Caco-2 (cell line): ENCODE measurements at regions of chr5 and their contacts with region 1.

Region 1: DNA sequence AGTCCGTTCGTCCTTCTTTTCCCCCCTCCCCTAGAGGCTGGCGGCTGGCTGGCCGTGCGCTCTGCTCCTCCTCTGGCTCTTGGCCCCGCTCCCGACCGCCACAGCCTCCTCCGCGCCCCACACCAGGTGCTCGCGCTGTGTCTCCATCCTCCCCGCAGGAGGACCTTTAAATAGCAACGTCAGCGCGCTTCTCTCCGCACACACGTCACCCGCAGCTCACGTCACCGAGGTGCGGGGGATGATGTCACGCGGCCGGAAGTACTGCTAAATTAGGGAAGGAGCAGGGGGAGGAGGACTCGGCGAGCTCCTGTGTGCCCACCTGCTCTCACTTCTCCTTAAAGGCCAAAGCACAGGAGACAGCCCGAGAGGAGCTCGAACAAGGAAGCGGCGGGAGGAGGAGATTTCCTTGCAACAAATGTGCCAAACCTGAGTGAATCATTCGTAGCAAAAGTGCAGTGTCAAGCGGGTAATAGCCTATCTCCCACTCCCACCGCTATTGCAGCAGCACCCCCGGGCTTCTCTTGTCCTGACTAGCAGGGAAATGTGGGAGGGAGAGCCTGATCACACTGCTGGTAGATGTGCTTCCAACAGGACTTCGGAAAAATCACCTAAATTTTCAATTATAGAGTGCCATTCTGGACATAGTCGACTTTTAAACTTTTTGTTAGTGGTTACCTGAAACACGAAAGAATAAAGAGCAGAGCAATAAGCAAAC is 614 bp upstream of the HOMER1 start:
- DNase-seq: peak; percentile 93 to 96
- H3K4me3 ChIP-seq: peak overlapping the region; percentile 93
- H3K4me3 Mint-ChIP-seq: peak overlapping the region; percentile 85
- H3K27ac Mint-ChIP-seq: peak overlapping the region; percentile 91
- H3K4me1 ChIP-seq: peaks cover 18% of the 10 kb centered on the region; the same call in 1 of the 2 replicates
- H3K4me1 Mint-ChIP-seq: peaks cover 10% of the 10 kb centered on the region
- H3K27me3 ChIP-seq: no peaks in the 10 kb centered on the region
- H3K27me3 Mint-ChIP-seq: no peaks in the 10 kb centered on the region
- CTCF ChIP-seq: no peak

Region 2: DNA sequence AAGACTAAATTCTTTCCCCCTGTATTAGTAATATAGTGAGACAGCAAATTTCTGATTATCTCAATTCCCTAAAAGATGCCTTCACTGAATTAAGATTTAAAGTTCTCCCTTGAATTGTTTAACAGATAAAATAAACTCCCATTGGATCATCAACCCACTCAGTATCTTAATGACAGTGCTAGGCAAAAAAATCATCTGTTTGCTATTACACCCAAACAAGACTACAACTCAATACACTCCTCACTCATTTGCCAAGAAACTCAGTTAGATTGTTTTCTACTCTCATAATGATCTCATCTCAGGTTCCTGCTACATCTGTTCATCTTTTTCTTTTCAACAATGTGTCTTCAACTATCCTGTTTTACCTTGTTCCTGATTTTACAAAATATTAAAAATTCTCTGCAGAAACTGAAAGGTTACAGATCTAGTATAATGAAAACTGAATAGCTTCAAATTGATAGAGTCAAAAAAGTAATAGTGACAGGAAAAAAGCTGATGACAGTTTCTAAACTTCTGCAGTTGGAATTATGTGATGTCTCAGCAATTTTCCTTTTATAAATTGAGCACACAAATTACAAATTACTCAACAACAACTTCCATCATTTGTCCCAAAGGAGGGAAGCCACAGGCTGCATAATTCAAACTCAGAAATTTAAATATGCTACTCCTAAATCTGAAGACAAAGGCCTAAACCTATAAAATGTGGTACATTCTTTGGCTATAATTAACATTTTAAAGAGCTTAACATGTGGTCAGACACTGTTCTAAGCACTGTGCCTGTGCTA is 40.0 kb before region 1 on chr5:
- CTCF ChIA-PET with region 1: no interaction called
- POLR2A ChIA-PET with region 1: interaction called, 11 read pairs
- intact Hi-C with region 1: no loop called
- DNase-seq: no peak
- H3K4me3 ChIP-seq: no peak overlapping the region
- H3K4me3 Mint-ChIP-seq: no peak overlapping the region
- H3K27ac Mint-ChIP-seq: no peak overlapping the region
- H3K4me1 ChIP-seq: no peaks in the 10 kb centered on the region
- H3K4me1 Mint-ChIP-seq: peaks cover 6% of the 10 kb centered on the region
- H3K27me3 ChIP-seq: no peaks in the 10 kb centered on the region
- H3K27me3 Mint-ChIP-seq: no peaks in the 10 kb centered on the region
- CTCF ChIP-seq: no peak

Region 3: GRCh38 chr5:79612667-79613198 is 98.2 kb after region 1 on chr5:
- CTCF ChIA-PET with region 1: no interaction called
- POLR2A ChIA-PET with region 1: interaction called, 6 read pairs
- intact Hi-C with region 1: loop called (anchors 1 kb)
- DNase-seq: no peak
- H3K4me3 ChIP-seq: peak overlapping the region; percentile 88
- H3K4me3 Mint-ChIP-seq: peak overlapping the region; percentile 85
- H3K27ac Mint-ChIP-seq: peak overlapping the region; percentile 81
- H3K4me1 ChIP-seq: 0 out of 2 replicates have a peak, but pooled peaks cover 4% of the 10 kb centered on the region
- H3K4me1 Mint-ChIP-seq: peaks cover 6% of the 10 kb centered on the region
- H3K27me3 ChIP-seq: no peaks in the 10 kb centered on the region
- H3K27me3 Mint-ChIP-seq: no peaks in the 10 kb centered on the region
- CTCF ChIP-seq: no peak